Dendritic cell treated with granulocyte-macrophage colony-stimulating factor and Interleukin-4, amounts not matched to agents 40 ng/mL and 50 ng/mL, for 4 days (primary cell): ENCODE measurements at regions of chr1 and their contacts with region 1.

Region 1: DNA sequence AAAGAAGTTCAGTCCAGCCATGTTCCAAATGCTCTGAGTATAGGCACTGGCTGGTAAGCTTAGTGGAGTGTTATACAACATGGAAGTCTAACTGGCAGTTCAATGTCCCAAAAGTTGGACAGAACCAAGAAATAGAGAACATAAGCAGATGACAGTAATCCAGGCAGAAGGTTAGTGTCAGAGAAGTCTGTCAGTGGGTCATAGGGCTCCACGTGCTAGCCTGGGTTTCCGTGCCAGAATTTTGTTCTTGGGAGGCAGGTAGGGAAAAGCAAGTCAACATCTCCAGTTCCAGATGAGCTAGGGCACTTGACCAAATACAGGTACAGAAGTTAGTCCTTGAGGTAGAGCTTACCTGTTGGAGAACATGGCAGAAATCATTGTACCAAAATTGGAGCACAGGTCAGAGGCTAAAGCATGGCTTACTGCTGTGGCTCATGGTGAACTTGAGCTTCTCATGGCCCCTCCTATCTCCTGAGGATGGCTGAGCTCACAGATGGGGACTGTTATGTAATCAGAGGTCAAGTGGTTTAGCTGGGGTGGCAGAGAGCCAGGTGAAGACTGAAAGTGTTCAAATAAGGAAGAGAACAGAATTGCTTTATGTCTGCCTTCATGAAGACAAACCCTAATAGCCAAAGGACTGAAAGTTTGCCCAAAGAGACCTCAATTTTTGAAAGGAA is 170.8 kb downstream of the NFIA start:
- H3K4me3 Mint-ChIP-seq: no peak overlapping the region
- H3K27ac Mint-ChIP-seq: no peak overlapping the region
- H3K4me1 Mint-ChIP-seq: peaks cover 33% of the 10 kb centered on the region
- H3K27me3 Mint-ChIP-seq: no peaks in the 10 kb centered on the region

Region 2: DNA sequence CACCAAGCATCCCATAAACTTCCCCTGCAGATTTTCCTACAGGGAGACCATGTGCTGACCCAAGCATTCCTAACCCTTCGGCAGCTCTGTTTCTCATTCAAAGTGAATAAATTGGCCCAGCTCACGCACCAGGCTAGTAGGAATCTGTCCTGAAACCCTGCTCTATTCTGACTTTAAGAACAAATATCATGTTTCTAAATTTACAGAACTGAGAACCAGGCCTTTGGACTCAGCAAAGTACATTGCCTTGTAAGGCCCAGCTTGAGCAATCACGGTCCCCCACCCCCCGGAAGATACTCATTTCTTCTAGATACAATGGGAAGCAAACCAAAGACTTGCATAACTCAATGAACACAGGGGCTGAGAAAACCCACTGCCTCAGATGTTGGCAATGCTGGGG is 330.9 kb before region 1 on chr1:
- intact Hi-C with region 1: no loop called
- H3K4me3 Mint-ChIP-seq: peak overlapping the region; percentile 4
- H3K27ac Mint-ChIP-seq: peak overlapping the region; percentile 74
- H3K4me1 Mint-ChIP-seq: peaks cover 58% of the 10 kb centered on the region
- H3K27me3 Mint-ChIP-seq: no peaks in the 10 kb centered on the region

Region 3: GRCh38 chr1:61641578-61642336 is 388.6 kb after region 1 on chr1:
- intact Hi-C with region 1: loop called (anchors 10 kb)
- H3K4me3 Mint-ChIP-seq: peak overlapping the region; percentile 76
- H3K27ac Mint-ChIP-seq: peak overlapping the region; percentile 95
- H3K4me1 Mint-ChIP-seq: peaks cover 43% of the 10 kb centered on the region
- H3K27me3 Mint-ChIP-seq: peaks cover 3% of the 10 kb centered on the region